ENCODE measurements at regions of chr1 and their contacts with region 1.

Region 1: GRCh38 chr1:28329395-28330153 is 734 bp downstream of the MED18 start:
- DNase-seq: peak; percentile 66
- ATAC-seq: peak; percentile 21
- H3K4me3 Mint-ChIP-seq: peak overlapping the region; percentile 95
- H3K27ac Mint-ChIP-seq: peak overlapping the region; percentile 98
- H3K4me1 Mint-ChIP-seq: peaks cover 35% of the 10 kb centered on the region
- H3K27me3 Mint-ChIP-seq: no peaks in the 10 kb centered on the region

Region 2: GRCh38 chr1:28160782-28161266 is 168.8 kb before region 1 on chr1:
- CTCF ChIA-PET with region 1: no interaction called
- POLR2A ChIA-PET with region 1: no interaction called
- DNase-seq: no peak
- ATAC-seq: no peak
- H3K4me3 Mint-ChIP-seq: no peak overlapping the region
- H3K27ac Mint-ChIP-seq: no peak overlapping the region
- H3K4me1 Mint-ChIP-seq: peaks cover 10% of the 10 kb centered on the region
- H3K27me3 Mint-ChIP-seq: peaks cover 27% of the 10 kb centered on the region

Region 3: DNA sequence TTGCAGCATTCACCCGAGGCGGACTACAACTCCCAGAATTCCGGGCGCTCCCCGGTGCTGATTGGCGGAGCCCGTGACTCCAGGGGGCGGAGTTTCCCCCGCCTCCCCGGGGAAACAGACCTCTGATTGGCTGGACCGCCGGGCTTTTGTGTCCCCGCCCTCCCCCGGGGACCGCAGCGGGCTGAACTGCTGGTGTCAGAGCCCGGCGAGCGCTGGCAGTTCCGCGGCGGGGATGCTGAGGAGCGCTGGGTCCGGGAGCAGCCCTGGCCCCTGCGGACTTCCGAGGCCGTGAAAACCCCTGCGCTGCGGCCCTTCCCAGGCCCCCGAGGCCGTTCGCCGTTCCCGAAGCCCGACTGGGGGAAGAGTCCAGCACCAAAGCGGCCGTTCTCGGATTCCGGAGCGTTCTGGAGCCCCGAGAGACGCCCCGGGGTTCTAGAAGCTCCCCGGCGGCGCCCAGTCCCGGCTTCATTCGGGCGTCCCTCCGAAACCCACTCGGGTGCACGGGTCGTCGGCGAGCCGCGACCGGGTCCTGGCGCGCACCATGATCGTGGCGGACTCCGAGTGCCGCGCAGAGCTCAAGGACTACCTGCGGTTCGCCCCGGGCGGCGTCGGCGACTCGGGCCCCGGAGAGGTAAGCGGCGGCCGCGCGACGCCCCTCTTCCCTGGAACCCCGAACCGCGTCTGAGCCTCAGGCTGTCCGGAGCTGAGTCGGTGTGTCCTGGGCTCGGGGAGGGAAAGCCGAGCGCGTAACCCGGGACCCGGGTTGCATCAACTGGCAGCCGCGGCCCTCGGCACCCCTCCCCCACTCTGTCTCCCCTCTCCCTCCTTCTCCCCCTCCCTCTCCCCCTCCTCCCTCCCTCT is 70.0 kb before region 1 on chr1 and contains the start of gene SESN2:
- CTCF ChIA-PET with region 1: interaction called, 4 read pairs
- POLR2A ChIA-PET with region 1: interaction called, 19 read pairs
- DNase-seq: peak; percentile 100
- ATAC-seq: peak; percentile 92
- H3K4me3 Mint-ChIP-seq: peak within 1 kb of the TSS; percentile 82
- H3K27ac Mint-ChIP-seq: peak within 1 kb of the TSS; percentile 86
- H3K4me1 Mint-ChIP-seq: peaks cover 50% of the 10 kb centered on the region
- H3K27me3 Mint-ChIP-seq: no peaks in the 10 kb centered on the region
- total RNA-seq, gene SESN2: 12.5 to 12.6 TPM

Region 4: DNA sequence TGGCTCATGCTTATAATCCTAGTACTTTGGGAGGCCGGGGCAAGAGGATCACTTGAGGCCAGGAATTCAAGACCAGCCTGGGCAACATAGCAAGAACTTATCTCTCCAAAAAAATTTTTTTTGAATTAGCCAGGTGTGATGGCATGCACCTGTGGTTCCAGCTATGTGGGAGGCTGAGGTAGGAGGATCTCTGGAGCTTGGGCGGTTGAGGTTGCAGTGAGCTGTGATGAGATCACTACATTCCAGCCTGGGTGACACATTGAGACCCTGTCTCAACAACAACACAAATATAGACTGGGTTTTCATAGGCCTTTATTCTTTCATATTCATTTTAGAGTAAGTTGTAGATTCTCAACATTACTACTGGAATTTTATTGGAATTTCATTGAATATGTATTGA is 12.0 kb after region 1 on chr1:
- CTCF ChIA-PET with region 1: interaction called, 6 read pairs
- POLR2A ChIA-PET with region 1: interaction called, 34 read pairs
- DNase-seq: no peak
- ATAC-seq: no peak
- H3K4me3 Mint-ChIP-seq: no peak overlapping the region
- H3K27ac Mint-ChIP-seq: no peak overlapping the region
- H3K4me1 Mint-ChIP-seq: peaks cover 20% of the 10 kb centered on the region
- H3K27me3 Mint-ChIP-seq: no peaks in the 10 kb centered on the region

Region 5: GRCh38 chr1:28359592-28360239 is 30.1 kb after region 1 on chr1:
- CTCF ChIA-PET with region 1: interaction called, 26 read pairs
- POLR2A ChIA-PET with region 1: interaction called, 5 read pairs
- DNase-seq: peak; percentile 87
- ATAC-seq: peak; percentile 68
- H3K4me3 Mint-ChIP-seq: no peak overlapping the region
- H3K27ac Mint-ChIP-seq: no peak overlapping the region
- H3K4me1 Mint-ChIP-seq: peaks cover 10% of the 10 kb centered on the region
- H3K27me3 Mint-ChIP-seq: peaks cover 3% of the 10 kb centered on the region

Region 6: DNA sequence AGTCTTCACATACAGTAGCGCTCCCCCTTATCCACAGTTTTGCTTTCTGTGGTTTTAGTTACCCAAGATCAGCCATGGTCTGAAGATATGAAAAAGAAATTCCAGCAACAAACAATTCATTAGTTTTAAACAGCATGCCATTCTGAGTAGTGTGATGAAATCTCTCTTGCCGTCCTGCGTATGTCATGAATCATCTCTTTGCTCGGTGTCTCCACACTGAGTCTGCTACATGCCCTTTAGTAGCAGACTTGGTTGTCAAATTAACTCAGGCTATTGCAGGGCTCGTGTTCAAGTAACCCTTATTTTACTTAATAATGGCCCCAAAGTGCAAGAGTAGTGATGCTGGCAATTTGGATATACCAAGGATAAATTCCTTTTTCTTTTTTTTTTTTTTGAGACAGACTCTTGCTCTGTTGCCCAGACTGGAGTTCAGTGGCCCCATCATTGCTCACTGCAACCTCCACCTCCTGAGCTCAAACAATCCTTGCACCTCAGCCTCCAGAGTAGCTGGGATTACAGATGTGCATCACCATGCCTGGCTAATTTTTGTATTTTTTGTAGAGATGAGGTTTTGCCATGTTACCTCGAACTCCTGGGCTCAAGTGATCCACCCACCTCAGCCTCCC is 62.6 kb after region 1 on chr1:
- CTCF ChIA-PET with region 1: no interaction called
- POLR2A ChIA-PET with region 1: no interaction called
- DNase-seq: no peak
- ATAC-seq: no peak
- H3K4me3 Mint-ChIP-seq: no peak overlapping the region
- H3K27ac Mint-ChIP-seq: no peak overlapping the region
- H3K4me1 Mint-ChIP-seq: peaks cover 8% of the 10 kb centered on the region
- H3K27me3 Mint-ChIP-seq: no peaks in the 10 kb centered on the region

Region 7: DNA sequence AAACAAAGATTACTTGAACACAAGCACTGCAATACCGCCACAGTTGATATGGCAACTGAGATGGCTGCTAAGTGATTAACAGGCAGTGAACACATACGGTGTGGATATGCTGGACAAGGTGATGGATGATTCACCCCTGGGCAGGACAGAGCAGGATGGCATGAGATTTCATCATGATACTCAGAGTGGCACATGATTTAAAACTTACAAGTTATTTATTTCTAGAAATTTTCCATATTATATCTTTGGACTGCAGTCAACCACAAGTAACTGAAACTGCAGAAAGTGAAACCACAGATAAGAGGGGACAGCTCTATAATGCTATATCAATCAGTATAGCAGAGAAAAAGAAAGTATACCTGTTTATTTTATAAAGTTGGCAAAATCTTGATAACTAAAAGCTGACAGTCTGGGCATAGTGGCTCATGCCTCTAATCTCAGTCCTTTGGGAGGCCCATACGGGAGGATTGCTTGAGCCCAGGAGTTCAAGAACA is 87.9 kb after region 1 on chr1:
- CTCF ChIA-PET with region 1: no interaction called
- POLR2A ChIA-PET with region 1: no interaction called
- DNase-seq: peak; percentile 28
- ATAC-seq: peak; percentile 81
- H3K4me3 Mint-ChIP-seq: peak overlapping the region; percentile 49
- H3K27ac Mint-ChIP-seq: peak overlapping the region; percentile 69
- H3K4me1 Mint-ChIP-seq: peaks cover 14% of the 10 kb centered on the region
- H3K27me3 Mint-ChIP-seq: no peaks in the 10 kb centered on the region